HCT116 (cell line): ENCODE measurements at regions of chr17 and their contacts with region 1.

Region 1: DNA sequence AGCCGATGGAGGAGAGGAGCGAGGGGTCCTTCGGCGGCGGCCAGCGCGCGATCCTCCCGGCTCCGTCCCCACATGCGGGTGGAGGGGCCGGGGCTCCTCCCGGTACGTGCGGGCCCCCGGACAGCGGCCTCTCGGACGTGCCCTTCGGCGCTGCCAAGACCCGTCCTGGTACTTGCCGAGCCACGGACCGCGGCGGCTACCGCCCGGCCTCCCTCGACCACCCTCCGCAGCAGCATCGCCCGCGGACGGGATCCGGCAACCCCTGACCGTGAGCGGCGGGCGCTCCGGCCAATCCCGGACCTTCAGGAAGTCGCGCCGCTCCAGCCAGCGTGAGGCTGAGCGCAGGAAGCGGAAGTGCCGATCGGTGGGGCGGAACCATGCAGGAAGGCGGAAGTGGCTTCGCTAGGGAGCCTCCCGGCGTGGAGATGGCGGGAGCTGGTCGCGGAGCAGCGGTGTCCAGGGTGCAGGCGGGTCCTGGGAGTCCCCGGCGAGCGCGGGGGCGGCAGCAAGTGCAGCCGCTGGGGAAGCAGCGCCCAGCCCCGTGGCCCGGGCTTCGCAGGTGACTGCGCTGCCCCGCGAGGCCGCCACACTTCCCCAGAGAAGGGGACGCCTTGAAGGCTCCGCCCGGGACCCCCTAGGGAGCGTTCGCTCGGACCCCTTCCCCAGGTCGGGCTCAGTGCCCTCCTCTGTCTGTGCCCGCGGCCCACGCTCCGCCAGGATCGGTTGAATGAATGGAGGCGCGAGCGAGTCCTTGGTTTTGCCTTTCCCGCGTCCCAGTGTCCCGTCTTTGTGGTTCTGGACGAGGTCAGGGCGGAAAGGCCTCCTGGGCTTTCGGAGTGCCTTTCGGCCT is at the starts of genes CCDC137 and OXLD1:
- DNase-seq: peak; percentile 94
- ATAC-seq: peak; percentile 86
- H3K4me3 ChIP-seq: peak within 1 kb of the TSS; percentile 78 to 84
- H3K27ac ChIP-seq: peak within 1 kb of the TSS; percentile 86
- H3K4me1 ChIP-seq: peaks cover 40 to 48% of the 10 kb centered on the region in 2 experiments
- H3K27me3 ChIP-seq: no peaks in the 10 kb centered on the region
- CTCF ChIP-seq: no peak
- POLR2A ChIP-seq: peak; percentile 93
- RAD21 ChIP-seq: no peak
- total RNA-seq, gene CCDC137: 77.5 TPM
- total RNA-seq, gene OXLD1: 75.9 TPM

Region 2: GRCh38 chr17:81577278-81578000 is 89.1 kb before region 1 on chr17:
- CTCF ChIA-PET with region 1: no interaction called
- POLR2A ChIA-PET with region 1: no interaction called
- RAD21 ChIA-PET with region 1: no interaction called
- intact Hi-C with region 1: no loop called
- DNase-seq: no peak
- ATAC-seq: peak; percentile 36
- H3K4me3 ChIP-seq: no peak overlapping the region
- H3K27ac ChIP-seq: peak overlapping the region; percentile 40
- H3K4me1 ChIP-seq: peaks cover 24 to 42% of the 10 kb centered on the region in 2 experiments
- H3K27me3 ChIP-seq: no peaks in the 10 kb centered on the region
- CTCF ChIP-seq: no peak
- POLR2A ChIP-seq: no peak
- RAD21 ChIP-seq: no peak

Region 3: GRCh38 chr17:81636505-81637288 is 29.9 kb before region 1 on chr17 and contains the starts of genes NPLOC4 and TSPAN10:
- CTCF ChIA-PET with region 1: interaction called, 3 read pairs
- POLR2A ChIA-PET with region 1: interaction called, 3 read pairs
- RAD21 ChIA-PET with region 1: no interaction called
- intact Hi-C with region 1: loop called (anchors 1 kb)
- DNase-seq: peak; percentile 71
- ATAC-seq: peak; percentile 82
- H3K4me3 ChIP-seq: peak within 1 kb of the TSS; percentile 74 to 94
- H3K27ac ChIP-seq: peak within 1 kb of the TSS; percentile 83
- H3K4me1 ChIP-seq: peaks cover 12 to 38% of the 10 kb centered on the region in 2 experiments
- H3K27me3 ChIP-seq: no peaks in the 10 kb centered on the region
- CTCF ChIP-seq: no peak
- POLR2A ChIP-seq: peak; percentile 81
- RAD21 ChIP-seq: no peak
- total RNA-seq, gene NPLOC4: 137 TPM
- total RNA-seq, gene TSPAN10: 2.3 TPM

Region 4: DNA sequence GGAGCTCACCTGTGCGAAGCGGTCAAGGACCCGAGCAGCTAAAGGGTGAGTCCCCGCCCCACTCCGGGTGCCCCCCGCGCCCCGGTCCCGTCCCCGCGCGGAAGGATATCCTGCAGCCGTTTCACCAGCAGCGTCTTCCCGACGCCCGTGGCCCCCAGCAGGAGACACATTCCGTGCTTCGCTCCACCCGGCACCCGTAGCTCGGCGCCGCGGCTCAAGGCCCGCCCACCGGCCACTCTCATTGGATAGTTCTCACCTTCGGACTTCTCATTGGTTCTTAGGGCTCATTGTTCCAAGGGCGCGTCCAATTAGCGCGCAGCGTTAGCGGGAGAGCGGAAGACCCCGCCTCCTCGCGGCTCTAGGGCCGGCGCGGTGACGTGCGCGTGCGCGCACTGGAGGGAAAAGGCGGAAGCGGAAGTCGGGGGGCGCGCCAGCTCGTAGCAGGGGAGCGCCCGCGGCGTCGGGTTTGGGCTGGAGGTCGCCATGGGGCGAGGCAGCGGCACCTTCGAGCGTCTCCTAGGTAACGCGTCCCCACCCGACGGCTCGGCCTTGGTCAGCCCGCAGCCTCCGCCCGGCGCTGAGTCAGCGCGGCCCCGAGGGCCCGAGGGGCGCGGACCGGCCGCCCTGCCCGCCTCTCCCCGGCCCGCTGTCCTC is 17.1 kb after region 1 on chr17 and contains the starts of genes ARL16 and HGS:
- CTCF ChIA-PET with region 1: no interaction called
- POLR2A ChIA-PET with region 1: interaction called, 7 read pairs
- RAD21 ChIA-PET with region 1: interaction called in 1 of 2 experiments, 4 read pairs
- intact Hi-C with region 1: loop called (anchors 1 kb)
- DNase-seq: peak; percentile 100
- ATAC-seq: peak; percentile 95
- H3K4me3 ChIP-seq: peak within 1 kb of the TSS; percentile 86 to 99
- H3K27ac ChIP-seq: peak within 1 kb of the TSS; percentile 92
- H3K4me1 ChIP-seq: peaks cover 18 to 23% of the 10 kb centered on the region in 2 experiments
- H3K27me3 ChIP-seq: no peaks in the 10 kb centered on the region
- CTCF ChIP-seq: no peak
- POLR2A ChIP-seq: peak; percentile 66
- RAD21 ChIP-seq: no peak
- total RNA-seq, gene ARL16: 47.5 TPM
- total RNA-seq, gene HGS: 231 TPM